ENCODE measurements at regions of chr22 and their contacts with region 1.

Region 1: DNA sequence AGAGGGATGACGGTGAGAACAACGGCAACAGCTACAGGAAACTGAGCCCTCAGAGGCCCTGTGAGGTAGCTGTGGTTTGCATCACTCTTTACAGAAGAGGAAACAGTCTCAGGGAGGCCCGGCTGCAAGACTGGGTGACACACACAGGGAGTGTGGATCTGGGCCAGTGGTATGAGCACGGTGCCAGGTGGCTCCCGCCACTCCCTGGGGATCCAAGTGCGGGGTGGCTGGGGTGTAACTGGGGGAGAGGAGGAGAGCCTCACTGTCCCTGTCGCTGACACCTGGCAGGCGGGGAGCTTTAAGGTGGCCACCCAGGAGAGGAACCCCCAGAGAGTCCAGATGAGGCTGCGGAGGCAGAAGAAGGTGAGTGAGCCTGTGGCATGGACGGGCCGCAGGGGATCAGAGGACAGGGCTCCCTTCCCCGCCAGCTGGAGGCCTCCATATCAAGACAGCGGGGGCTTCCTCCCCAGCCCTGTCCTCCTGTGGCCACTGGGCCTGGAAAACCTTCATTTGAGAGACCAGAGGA is 5.6 kb downstream of the RGL4 start:
- DNase-seq: peak; percentile 52 to 88 (median 82)
- H3K4me3 ChIP-seq: peak overlapping the region; percentile 76
- H3K4me3 Mint-ChIP-seq: peak overlapping the region; percentile 86 to 99 (median 96)
- H3K27ac ChIP-seq: peak overlapping the region; percentile 74
- H3K27ac Mint-ChIP-seq: peak overlapping the region; percentile 96 to 100 (median 100)
- H3K4me1 ChIP-seq: peaks cover 42% of the 10 kb centered on the region
- H3K4me1 Mint-ChIP-seq: peaks cover 45 to 69% (median 59%) of the 10 kb centered on the region in 3 donors
- H3K27me3 ChIP-seq: no peaks in the 10 kb centered on the region
- H3K27me3 Mint-ChIP-seq: no peaks in the 10 kb centered on the region

Region 2: DNA sequence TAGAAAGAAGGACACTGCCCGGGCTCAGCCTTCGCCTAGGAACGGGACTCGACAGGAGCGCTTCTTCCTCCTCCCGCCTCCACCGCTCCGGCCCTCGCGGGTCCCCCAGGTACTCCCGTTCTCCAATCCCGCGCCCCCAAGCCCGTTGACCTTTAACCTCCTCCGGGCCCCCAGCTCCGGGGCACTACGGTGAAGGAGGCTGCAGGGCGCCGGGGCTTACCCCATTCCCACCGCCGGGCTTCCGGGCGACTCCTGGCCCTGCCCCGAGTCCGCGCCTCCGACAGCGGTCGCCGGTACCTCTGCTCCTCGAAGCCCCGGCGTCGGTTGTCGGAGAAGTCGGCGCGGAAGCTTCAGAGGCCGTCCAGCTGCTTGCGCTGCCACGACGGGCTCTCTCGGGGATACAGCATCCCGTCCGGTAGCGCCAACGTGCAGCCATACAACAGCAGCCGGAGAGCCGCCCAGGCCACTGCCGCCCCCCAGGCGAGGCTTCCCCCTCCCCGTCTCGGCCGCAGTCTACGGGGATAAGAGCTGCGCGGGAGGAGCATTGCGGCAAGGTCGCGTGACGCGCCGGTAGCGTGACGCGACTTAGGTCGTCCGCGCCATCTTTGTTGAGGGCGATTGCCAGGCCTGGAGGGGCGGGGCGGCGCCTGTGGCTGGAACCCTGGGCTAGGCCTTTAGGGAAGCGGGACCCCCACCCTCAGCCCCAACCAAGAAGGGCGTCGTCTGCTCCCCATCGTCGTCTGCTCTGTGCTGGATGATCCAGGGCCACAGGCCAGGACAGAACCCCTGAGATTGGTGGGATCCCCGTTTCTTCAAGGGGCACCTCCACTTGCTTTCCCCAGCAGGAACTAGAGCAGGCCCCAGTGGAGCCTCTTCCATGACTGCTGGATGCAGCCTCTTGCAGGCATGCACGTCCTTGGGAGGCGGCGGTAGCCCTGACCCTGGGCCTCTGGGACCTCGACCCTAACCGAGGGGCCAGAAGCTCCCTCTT is 20.7 kb after region 1 on chr22:
- CTCF ChIA-PET with region 1: interaction called, 3 read pairs
- POLR2A ChIA-PET with region 1: interaction called, 13 read pairs
- DNase-seq: peak; percentile 72 to 88 (median 80)
- H3K4me3 ChIP-seq: peak overlapping the region; percentile 74
- H3K4me3 Mint-ChIP-seq: peak overlapping the region; percentile 66 to 91 (median 84)
- H3K27ac ChIP-seq: peak overlapping the region; percentile 72
- H3K27ac Mint-ChIP-seq: peak overlapping the region in 7 of 8 donors; percentile 70 to 92 (median 90)
- H3K4me1 ChIP-seq: peaks cover 16% of the 10 kb centered on the region
- H3K4me1 Mint-ChIP-seq: peaks cover 13 to 37% (median 22%) of the 10 kb centered on the region in 3 donors
- H3K27me3 ChIP-seq: no peaks in the 10 kb centered on the region
- H3K27me3 Mint-ChIP-seq: peaks cover 0 to under 1% of the 10 kb centered on the region in 2 donors